BJ (cell line): ENCODE measurements at regions of chr13 and their contacts with region 1.

Region 1: DNA sequence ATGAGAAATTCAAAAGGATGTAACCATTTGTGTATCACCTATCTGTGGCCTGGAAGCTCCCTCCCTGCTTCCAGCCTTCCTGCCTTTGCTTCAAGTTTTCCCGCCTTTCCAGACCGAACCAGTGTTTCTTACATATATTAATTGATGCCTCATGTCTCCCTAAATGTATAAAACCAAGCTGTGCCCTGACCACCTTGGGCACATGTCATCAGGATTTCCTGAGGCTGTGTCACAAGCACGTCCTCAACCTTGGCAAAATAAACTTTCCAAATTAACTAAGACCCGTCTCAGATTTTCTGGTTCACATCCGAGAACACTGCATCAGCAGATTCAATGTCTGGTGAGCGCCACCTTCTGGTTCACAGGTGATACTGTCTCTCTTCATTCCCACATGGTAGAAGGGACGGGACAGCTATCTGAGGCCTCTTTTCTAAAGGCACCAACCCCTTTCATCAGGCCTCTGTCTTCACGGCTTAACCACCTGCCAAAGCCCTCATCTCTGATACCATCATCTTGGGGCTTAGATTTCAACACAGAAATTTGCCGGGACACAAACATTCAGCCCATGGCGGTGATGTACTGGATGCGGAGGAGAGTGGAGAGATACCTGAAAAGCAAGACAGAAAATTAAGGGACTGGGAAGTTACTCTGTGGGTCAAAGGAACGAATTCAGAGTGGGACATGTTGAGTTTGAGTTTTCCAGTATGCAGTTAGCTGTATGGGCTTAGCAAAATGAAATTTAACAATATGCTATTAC is 58.7 kb upstream of the PABPC3 start:
- DNase-seq: no peak
- H3K4me3 ChIP-seq: no peak overlapping the region
- H3K27me3 ChIP-seq: peaks cover 3% of the 10 kb centered on the region; the same call in 1 of the 2 replicates
- CTCF ChIP-seq: peak; percentile 78

Region 2: DNA sequence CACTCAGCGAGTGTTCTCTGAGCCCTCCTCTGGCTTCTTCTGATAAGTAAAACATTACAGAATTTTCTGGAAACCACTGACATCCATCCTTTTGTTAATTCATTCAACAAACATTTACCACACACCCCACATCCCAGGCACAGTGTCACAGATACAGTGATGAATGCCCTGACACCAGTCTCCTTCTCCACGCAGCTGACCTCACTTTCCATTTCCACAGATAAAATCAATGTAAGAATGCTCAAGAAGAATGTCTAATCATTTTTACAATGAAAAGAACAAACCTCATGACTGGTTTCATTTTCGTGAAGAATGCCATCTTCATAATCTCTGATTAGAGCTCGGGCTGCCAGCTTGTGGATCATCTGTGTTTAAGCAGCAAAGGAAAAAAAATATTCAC is 593.9 kb before region 1 on chr13:
- CTCF ChIA-PET with region 1: no interaction called
- POLR2A ChIA-PET with region 1: no interaction called
- DNase-seq: no peak
- H3K4me3 ChIP-seq: no peak overlapping the region
- H3K27me3 ChIP-seq: no peaks in the 10 kb centered on the region
- CTCF ChIP-seq: no peak

Region 3: DNA sequence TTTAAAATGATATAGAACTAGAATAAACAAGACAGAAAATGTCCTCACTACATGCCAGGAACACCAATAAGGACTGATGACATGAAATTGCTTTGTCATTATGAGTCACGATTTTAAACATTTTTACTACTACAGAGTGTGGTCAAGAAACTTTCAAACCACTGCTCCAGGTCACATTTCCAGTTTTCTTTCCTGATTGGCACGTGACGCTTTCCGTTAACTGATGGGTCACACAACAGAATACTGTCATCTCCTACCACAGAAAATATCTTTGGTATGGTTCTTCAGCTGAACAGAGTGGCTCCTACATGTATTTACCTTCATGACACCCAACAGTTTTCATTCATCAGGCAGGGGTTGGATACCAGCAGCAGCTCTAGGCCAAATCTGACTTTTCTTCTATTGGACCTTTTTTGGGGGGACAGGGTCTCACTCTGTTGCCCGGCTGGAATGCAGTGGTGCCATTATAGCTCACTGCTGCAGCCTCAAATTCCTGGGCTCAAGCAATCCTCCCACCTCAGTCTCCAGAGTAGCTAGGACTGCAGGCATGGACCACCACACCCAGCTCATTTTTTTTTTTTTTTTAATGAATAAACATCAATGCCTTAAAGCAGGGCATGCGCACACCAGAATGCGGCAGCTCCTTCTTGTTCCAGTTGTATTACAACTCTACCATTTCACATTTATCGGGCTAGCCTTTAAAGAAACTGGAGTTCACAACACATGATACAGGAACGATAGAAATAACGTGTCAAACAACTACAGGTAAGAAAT is 125.9 kb before region 1 on chr13:
- CTCF ChIA-PET with region 1: no interaction called
- POLR2A ChIA-PET with region 1: no interaction called
- DNase-seq: peak; percentile 26
- H3K4me3 ChIP-seq: no peak overlapping the region
- H3K27me3 ChIP-seq: no peaks in the 10 kb centered on the region
- CTCF ChIP-seq: no peak

Region 4: DNA sequence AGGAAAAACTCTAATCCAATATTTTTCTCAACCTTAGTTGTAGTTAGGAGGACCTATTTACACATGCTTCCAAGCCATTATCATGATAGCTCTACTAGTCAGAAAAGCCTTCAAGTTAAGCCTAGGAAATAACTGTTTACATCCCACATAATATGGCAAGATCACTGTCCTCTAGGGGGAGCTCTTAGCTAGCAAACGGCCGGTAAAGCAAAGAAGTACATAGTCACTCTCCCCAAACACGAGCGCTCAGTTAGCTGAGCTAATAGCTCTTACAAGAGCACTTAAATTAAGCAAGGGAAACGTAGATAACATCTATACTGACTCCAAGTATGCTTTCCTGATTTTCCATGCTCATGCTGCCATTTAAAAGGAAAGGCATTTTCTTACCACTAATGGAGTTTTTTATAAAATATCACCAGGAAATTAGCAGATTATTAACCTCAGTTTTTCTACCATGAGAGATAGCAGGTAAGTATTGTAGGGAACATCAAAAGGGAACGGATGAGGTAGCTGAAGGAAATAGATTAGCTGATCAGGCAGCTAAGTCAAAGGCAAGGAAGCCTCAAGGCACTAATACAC is 41.9 kb before region 1 on chr13:
- CTCF ChIA-PET with region 1: interaction called, 16 read pairs
- POLR2A ChIA-PET with region 1: no interaction called
- DNase-seq: peak; percentile 20
- H3K4me3 ChIP-seq: no peak overlapping the region
- H3K27me3 ChIP-seq: no peaks in the 10 kb centered on the region; the same call in 1 of the 2 replicates
- CTCF ChIP-seq: peak; percentile 86

Region 5: DNA sequence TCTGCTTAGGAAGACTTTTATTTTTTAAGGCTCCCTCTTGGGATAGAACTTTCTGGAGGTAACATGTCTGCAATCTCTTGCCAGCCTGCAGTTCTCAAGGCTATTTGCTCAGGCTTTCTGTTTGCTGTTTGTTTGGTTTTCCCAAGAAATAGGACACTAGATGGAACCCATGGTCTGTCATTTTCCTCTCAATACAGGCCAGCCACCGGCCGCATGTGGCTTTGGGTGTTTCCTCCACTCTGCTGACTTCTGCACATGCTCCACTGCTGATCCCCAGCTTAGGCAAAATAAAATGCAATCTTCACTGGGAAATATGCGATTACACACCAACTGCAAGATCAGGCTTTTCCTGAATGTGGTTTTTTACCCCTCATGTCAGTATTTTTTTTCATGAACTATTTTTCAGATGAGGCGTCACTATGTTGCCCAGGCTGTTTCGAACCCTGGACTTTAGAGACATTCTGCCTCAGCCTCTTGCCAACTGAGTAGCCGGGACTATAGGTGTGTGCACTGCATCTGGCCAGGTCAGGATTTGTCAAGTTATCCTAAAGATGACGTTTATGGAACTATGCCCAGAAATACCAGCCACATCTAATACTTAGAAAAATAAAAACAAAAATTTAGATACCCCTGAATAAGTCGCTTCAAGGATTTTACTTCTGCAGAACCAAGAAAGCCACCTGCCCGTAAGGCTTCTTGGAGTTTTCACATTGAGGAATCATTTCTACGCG is 35.6 kb before region 1 on chr13:
- CTCF ChIA-PET with region 1: interaction called, 16 read pairs
- POLR2A ChIA-PET with region 1: no interaction called
- DNase-seq: no peak
- H3K4me3 ChIP-seq: no peak overlapping the region
- H3K27me3 ChIP-seq: no peaks in the 10 kb centered on the region; the same call in none of the 2 replicates
- CTCF ChIP-seq: no peak